AG04450 (cell line): ENCODE measurements at regions of chr15 and their contacts with region 1.

Region 1: GRCh38 chr15:70584838-70585706 is 178.3 kb downstream of the UACA start:
- DNase-seq: no peak
- H3K4me3 ChIP-seq: peak overlapping the region; percentile 38
- H3K27ac ChIP-seq: no peak overlapping the region
- H3K27me3 ChIP-seq: no peaks in the 10 kb centered on the region
- CTCF ChIP-seq: peak; percentile 58

Region 2: DNA sequence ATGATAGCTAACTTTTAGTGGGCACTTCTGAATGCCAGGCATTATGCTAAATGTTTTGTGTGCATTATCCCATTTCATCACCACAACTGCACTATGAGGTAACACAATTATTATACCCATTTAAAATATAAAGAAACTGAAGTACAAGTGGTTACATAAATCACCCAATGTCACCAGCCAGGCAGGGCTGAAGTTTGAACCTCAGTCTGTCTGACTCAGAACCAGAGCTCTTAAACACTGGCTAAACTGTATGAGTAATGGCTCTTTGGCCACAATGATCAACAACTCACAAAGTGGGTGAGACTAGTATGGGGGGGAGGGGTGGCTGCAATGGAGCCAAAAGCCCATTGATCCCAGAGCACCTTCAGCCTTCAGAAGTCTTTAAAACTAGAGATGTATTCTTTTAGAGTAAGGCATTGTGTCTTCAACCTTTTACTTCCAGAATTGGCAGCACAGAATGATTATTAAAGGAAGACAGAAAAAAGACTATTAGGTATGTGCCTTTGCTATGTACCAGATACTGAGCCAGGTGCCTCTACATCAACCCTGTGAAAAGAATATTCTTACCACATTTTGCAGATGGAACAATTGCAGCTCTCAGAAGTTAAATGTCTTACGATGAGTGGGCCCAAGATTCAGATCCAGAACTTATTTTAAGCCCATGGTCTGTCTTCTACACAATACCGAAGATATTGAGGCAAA is 11.4 kb after region 1 on chr15:
- CTCF ChIA-PET with region 1: interaction called, 16 read pairs
- POLR2A ChIA-PET with region 1: no interaction called
- DNase-seq: peak; percentile 48
- H3K4me3 ChIP-seq: no peak overlapping the region
- H3K27ac ChIP-seq: no peak overlapping the region
- H3K27me3 ChIP-seq: no peaks in the 10 kb centered on the region
- CTCF ChIP-seq: no peak